ENCODE measurements at regions of chr11 and their contacts with region 1.

Region 1: GRCh38 chr11:113532697-113533424 is 57.7 kb upstream of the DRD2 start:
- DNase-seq: peak; percentile 78
- ATAC-seq: peak; percentile 84 to 90
- H3K4me3 ChIP-seq: no peak overlapping the region
- H3K27ac ChIP-seq: no peak overlapping the region
- H3K4me1 ChIP-seq: no peaks in the 10 kb centered on the region
- H3K27me3 ChIP-seq: peaks cover 5% of the 10 kb centered on the region
- CTCF ChIP-seq: peak; percentile 91

Region 2: GRCh38 chr11:113305440-113306336 is 227.2 kb before region 1 on chr11:
- intact Hi-C with region 1: loop called (anchors 10 kb)
- DNase-seq: peak; percentile 82
- ATAC-seq: peak; percentile 89 to 93
- H3K4me3 ChIP-seq: no peak overlapping the region
- H3K27ac ChIP-seq: no peak overlapping the region
- H3K4me1 ChIP-seq: no peaks in the 10 kb centered on the region
- H3K27me3 ChIP-seq: peaks cover 6% of the 10 kb centered on the region
- CTCF ChIP-seq: peak; percentile 93

Region 3: DNA sequence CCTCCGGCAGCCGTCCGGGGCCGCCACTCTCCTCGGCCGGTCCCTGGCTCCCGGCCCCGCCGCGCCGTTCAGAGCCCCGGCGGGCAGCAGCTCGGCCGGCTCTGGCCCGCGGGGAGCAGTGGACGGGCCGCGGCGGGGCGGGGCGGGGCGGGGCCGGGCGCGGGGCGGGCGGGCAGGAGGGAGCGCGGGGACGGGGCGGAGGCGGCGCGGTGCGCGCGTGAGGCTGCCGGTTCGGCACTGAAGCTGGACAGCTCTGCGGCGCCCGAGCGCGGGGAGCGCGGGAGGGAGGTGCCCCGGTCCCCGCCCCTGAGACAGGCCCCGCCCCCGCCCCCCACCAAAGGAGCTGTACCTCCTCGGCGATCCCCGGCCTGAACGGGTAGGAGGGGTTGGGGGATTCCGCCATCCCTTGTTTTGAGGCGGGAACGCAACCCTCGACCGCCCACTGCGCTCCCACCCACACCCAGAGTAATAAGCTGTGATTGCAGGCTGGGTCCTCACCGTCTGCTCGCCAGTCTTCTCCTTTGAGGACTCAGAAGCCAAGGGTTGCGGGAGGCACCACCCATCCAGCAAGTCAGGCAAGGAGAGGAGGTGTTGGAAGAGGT is 57.6 kb before region 1 on chr11 and contains the start of gene DRD2:
- intact Hi-C with region 1: no loop called
- DNase-seq: no peak
- ATAC-seq: peak; percentile 12
- H3K4me3 ChIP-seq: peak within 1 kb of the TSS; percentile 2
- H3K27ac ChIP-seq: no peak within 1 kb of the TSS
- H3K4me1 ChIP-seq: peaks cover 5% of the 10 kb centered on the region
- H3K27me3 ChIP-seq: peaks cover 77% of the 10 kb centered on the region
- CTCF ChIP-seq: no peak
- total RNA-seq, gene DRD2: not detected